CD4-positive, alpha-beta T cell (primary cell): ENCODE measurements at regions of chr6 and their contacts with region 1.

Region 1: DNA sequence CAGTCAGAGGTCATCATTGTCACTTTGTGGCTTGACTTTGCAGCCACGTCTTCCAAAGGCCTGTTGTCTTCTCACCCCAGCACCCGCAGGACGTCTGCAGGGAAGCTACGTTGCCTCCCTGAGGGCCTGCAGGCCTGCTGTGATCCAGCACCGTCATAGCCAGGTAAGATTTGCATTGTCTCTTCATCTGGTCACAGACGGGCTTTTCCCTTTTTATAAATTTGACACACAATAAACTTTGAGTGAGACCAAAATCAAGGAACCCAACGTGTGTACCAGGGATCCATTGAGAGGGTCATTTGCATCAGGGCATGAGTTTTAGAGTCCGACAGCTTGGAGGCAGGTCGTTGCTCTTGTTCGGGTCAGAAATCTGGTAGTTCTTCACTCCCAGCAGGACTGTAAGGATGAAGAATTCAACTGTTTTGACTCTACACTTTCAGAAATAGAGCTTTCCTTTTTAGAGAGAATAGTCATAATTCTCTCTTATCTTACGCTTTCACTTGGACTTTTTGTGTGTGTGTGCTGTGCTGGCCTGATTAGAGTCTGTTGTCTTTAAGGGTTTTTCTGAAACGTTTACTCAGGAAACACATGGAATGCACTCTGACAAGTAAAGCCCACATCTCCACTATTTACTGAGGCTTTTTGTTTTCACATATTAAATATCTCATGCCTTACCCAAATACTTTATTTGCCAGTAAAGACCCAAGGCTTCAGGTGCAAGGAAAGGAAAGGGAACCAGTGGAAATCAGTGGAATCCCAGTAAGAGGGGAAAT is 177.2 kb upstream of the TAB2 start:
- DNase-seq: peak; percentile 10 to 90 (median 48)
- ATAC-seq: peak; percentile 71
- H3K4me3 ChIP-seq: peak overlapping the region; percentile 13
- H3K4me3 Mint-ChIP-seq: peak overlapping the region; percentile 64
- H3K27ac ChIP-seq: peak overlapping the region; percentile 91 to 94
- H3K27ac Mint-ChIP-seq: peak overlapping the region; percentile 99
- H3K4me1 ChIP-seq: peaks cover 29% of the 10 kb centered on the region
- H3K4me1 Mint-ChIP-seq: peaks cover 39% of the 10 kb centered on the region
- H3K27me3 ChIP-seq: no peaks in the 10 kb centered on the region
- H3K27me3 Mint-ChIP-seq: no peaks in the 10 kb centered on the region
- CTCF ChIP-seq: no peak

Region 2: DNA sequence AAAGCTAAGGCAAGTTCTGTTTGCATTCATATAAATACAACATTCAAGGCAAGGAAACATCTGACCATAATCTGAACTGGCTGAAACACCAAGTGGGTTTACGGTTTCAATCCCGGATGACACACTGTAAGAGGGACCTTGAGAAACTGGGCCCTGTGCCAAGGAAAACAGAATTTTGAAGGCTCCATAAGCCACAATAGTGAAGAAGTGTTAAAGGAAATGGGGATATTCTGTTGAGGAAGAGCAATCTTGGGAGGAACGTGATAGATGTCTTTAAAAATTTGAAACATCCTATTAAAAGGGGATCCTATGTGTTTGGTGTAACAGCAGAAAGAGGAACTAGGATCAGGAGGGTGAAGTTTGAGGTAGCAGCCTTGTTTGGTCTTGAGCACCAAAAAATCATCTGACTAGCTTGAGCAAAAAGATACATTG is 94.8 kb after region 1 on chr6:
- CTCF ChIA-PET with region 1: no interaction called
- POLR2A ChIA-PET with region 1: no interaction called
- intact Hi-C with region 1: loop called in 1 of 2 experiments (anchors 2 kb)
- DNase-seq: peak in 2 of 14 experiments; percentile 46 to 47
- ATAC-seq: no peak
- H3K4me3 ChIP-seq: no peak overlapping the region
- H3K4me3 Mint-ChIP-seq: peak overlapping the region; percentile 13
- H3K27ac ChIP-seq: peak overlapping the region in 1 of 2 donors; percentile 87
- H3K27ac Mint-ChIP-seq: peak overlapping the region; percentile 87
- H3K4me1 ChIP-seq: peaks cover 35% of the 10 kb centered on the region
- H3K4me1 Mint-ChIP-seq: peaks cover 45% of the 10 kb centered on the region
- H3K27me3 ChIP-seq: no peaks in the 10 kb centered on the region
- H3K27me3 Mint-ChIP-seq: no peaks in the 10 kb centered on the region
- CTCF ChIP-seq: no peak